Activated CD4-positive, alpha-beta T cell treated with anti-CD3 and anti-CD28 coated beads, Interleukin-2, amount 10 ng/mL, durations not matched to agents 7 days and 5 days (primary cell): ENCODE measurements at regions of chr6 and their contacts with region 1.

Region 1: DNA sequence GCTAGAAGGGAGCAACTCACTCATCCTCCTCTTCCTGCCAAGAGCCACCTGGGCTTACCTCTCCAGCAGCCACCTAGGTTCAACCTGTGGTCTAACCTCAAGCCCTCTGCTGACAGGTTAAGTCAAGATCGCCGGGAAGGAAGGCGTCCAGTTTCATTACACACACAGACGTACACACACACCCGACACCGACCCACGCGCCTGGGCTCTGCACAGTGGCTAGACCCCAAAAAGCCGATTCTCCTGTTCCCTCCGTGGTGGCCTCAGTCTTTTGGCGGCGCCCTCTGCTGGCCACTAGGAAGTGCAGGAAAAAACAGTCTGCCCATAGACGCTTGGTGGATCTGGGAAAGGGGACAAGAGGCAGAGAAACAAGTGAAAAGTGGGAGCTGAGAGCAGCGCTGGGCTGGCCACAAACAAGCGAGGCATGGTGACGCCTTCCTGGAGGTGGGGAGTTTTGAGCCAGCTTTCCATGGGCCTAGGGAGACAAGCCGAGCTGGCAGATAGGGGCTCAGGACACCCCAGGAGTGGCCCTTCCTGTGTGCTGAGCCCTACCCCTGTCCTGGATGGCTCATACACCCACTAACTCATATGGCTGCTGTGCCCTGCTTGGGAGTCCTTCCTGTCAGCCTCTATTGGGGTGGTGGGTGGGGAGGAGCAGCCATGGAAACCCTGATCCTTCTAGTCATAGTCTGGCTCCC is 52.7 kb downstream of the MRPL14 start:
- DNase-seq: peak; percentile 71
- H3K4me3 Mint-ChIP-seq: peak overlapping the region; percentile 87
- H3K27ac Mint-ChIP-seq: peak overlapping the region; percentile 80
- H3K4me1 Mint-ChIP-seq: peaks cover 26% of the 10 kb centered on the region
- H3K27me3 Mint-ChIP-seq: peaks cover 13% of the 10 kb centered on the region

Region 2: DNA sequence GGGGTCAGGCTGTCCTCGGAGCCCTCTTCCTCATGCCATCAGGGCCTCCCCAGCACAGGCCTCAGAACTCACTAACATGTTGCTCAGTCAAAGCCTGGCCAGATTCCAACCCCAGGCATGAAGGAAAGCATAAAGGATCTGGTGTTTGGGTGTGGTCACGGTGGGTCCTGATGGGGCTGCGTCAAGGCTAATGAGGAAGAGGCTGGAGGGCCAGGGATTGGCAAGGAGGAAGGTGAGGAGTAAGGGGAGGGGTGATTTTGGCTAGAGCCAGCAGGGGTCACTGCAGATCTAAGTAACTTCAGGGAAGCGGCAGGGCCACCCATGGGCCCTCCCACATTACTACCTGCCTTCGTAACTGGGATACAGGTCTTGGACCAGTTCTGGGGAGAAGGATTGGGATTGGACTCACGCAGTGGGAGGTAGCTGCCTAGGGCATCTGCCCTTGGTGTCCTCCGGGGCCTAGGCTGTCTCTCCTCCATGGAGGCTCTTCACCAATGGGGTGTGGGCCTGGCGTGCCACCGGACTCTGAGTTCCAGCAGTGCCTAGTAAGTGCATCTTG is 350.8 kb before region 1 on chr6:
- CTCF ChIA-PET with region 1: interaction called, 10 read pairs
- POLR2A ChIA-PET with region 1: no interaction called
- DNase-seq: peak; percentile 76
- H3K4me3 Mint-ChIP-seq: no peak overlapping the region
- H3K27ac Mint-ChIP-seq: no peak overlapping the region
- H3K4me1 Mint-ChIP-seq: peaks cover 32% of the 10 kb centered on the region
- H3K27me3 Mint-ChIP-seq: peaks cover 8% of the 10 kb centered on the region

Region 3: GRCh38 chr6:43769526-43770416 is 304.8 kb before region 1 on chr6 and contains the start of gene VEGFA:
- CTCF ChIA-PET with region 1: interaction called, 45 read pairs
- POLR2A ChIA-PET with region 1: interaction called, 3 read pairs
- DNase-seq: peak; percentile 91
- H3K4me3 Mint-ChIP-seq: peak within 1 kb of the TSS; percentile 88
- H3K27ac Mint-ChIP-seq: peak within 1 kb of the TSS; percentile 86
- H3K4me1 Mint-ChIP-seq: peaks cover 31% of the 10 kb centered on the region
- H3K27me3 Mint-ChIP-seq: peaks cover 5% of the 10 kb centered on the region
- total RNA-seq, gene VEGFA: 23.7 to 25.8 TPM

Region 4: DNA sequence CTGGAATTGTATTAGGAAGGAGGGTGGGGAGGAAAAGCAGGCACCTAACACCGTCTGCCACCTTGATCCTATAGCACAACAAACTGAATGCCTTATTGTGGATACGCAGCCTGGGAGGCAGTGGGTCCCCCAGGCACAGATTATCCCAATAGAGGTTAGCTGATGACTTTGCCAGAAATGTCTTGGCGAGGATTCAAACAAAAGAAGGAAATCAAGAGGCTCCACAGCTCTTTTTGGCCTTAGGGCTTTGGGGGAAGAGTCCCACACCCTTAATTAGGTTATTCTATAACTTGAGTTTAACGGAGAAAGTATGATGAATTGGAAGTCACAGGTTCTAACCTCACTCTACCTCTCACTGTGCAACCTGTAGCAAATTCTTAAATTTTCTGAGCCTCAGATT is 49.4 kb before region 1 on chr6:
- CTCF ChIA-PET with region 1: no interaction called
- POLR2A ChIA-PET with region 1: no interaction called
- DNase-seq: no peak
- H3K4me3 Mint-ChIP-seq: no peak overlapping the region
- H3K27ac Mint-ChIP-seq: no peak overlapping the region
- H3K4me1 Mint-ChIP-seq: no peaks in the 10 kb centered on the region
- H3K27me3 Mint-ChIP-seq: peaks cover 14% of the 10 kb centered on the region

Region 5: DNA sequence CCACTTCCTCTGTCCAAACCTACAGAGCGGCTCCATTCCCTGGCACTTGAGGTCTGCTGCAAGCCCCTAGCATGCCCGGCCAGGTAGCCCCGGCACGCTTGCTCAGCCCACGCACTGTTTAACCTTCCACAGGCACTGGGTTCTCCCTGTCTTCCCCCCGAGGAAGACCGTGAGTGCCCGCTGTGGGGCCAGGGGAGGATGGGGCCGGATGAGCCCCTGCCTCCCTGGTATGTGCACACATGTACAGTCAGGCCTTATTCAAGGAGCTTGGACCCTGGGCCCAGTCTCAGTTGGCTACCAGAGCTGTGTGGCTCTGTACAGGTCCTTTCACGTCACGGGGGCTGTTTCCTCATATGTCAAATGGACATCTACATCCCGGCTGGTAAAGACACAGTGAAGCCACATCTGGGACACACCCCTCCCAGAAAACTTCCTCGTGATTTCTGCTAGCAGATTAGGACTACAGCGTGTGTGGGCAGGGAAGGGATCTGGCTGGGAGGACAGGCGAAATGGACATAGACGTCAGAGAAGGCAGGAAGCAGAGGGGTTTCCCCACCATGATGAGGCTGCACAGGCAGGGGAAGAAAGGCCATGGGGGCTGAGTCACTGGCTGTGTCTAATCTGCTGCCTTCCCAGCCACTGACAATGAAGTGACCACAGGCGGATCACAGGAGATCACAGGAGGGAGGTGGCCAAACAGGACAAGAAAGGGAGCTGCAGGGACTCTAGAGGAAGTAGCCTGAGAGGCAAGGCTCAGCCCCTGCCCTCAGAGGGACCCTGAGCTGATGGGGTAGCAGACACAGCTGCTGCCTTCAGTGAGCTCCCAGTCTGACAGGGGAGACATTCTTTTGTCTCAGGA is 10.3 kb before region 1 on chr6:
- CTCF ChIA-PET with region 1: interaction called, 11 read pairs
- POLR2A ChIA-PET with region 1: no interaction called
- DNase-seq: no peak
- H3K4me3 Mint-ChIP-seq: no peak overlapping the region
- H3K27ac Mint-ChIP-seq: no peak overlapping the region
- H3K4me1 Mint-ChIP-seq: no peaks in the 10 kb centered on the region
- H3K27me3 Mint-ChIP-seq: peaks cover 9% of the 10 kb centered on the region